ENCODE measurements at regions of chr3 and their contacts with region 1.

Region 1: DNA sequence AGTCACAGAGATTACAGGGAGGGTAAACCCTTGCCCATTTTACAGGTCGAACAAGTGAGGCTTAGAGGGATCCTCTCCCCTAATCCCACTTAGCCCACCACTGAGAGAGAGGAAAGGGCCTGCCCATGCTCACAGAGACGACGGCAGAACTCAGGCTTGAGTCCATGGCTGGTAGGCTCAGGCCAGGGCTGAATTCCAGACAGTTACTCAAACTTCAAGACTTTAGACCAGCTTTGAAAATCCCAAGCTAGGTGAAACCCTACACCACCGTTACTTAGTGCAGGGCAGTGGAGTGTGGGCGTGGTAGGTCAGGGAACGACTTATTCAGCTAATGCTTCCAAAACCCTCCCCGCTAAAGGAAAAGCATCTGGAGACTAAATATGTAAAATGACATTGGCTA is 16.4 kb downstream of the GRIP2 start:
- DNase-seq: no peak
- ATAC-seq: peak in 3 of 8 donors; percentile 0 to 1 (median 1)
- H3K4me3 ChIP-seq: no peak overlapping the region
- H3K27ac ChIP-seq: peak overlapping the region; percentile 56 to 96 (median 87)
- H3K4me1 ChIP-seq: peaks cover 21 to 80% (median 50%) of the 10 kb centered on the region in 9 donors
- H3K27me3 ChIP-seq: no peaks in the 10 kb centered on the region
- CTCF ChIP-seq: no peak

Region 2: DNA sequence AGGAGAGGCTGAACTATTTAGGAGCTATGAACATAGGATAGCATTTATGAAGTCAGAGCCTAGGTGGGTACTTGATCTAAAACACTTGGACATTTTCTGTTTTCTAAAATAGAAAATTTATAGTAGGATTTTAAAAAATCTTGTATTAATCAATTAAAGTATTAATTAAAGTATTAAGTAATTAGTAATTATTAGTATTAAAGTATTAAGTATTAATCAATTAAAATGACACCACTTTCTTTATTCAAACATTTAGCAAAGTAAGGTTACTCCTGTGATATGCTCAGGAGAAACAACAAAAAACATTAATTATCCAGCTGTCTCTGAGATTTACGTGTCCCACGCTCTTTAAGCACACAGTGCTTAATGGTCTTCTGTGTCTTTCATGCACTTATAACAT is 431.3 kb before region 1 on chr3:
- intact Hi-C with region 1: no loop called
- DNase-seq: no peak
- ATAC-seq: no peak
- H3K4me3 ChIP-seq: no peak overlapping the region
- H3K27ac ChIP-seq: no peak overlapping the region
- H3K4me1 ChIP-seq: no peaks in the 10 kb centered on the region
- H3K27me3 ChIP-seq: peaks cover 0 to 20% (median 4%) of the 10 kb centered on the region in 7 donors
- CTCF ChIP-seq: no peak

Region 3: GRCh38 chr3:14461748-14462324 is 62.0 kb before region 1 on chr3:
- intact Hi-C with region 1: no loop called
- DNase-seq: peak; percentile 51 to 59
- ATAC-seq: peak in 6 of 8 donors; percentile 35 to 74 (median 60)
- H3K4me3 ChIP-seq: no peak overlapping the region
- H3K27ac ChIP-seq: no peak overlapping the region
- H3K4me1 ChIP-seq: peaks cover 2 to 42% (median 25%) of the 10 kb centered on the region in 9 donors
- H3K27me3 ChIP-seq: peaks cover 0 to 37% (median 4%) of the 10 kb centered on the region in 7 donors
- CTCF ChIP-seq: peak in 8 of 9 donors; percentile 22 to 72 (median 55)

Region 4: GRCh38 chr3:14537590-14538447 is 14.0 kb after region 1 on chr3:
- intact Hi-C with region 1: loop called in 2 of 10 experiments (anchors 2 kb)
- DNase-seq: no peak
- ATAC-seq: peak in 6 of 8 donors; percentile 18 to 45 (median 36)
- H3K4me3 ChIP-seq: peak overlapping the region in 1 of 10 donors; percentile 60
- H3K27ac ChIP-seq: peak overlapping the region; percentile 10 to 96 (median 88)
- H3K4me1 ChIP-seq: peaks cover 24 to 79% (median 64%) of the 10 kb centered on the region in 9 donors
- H3K27me3 ChIP-seq: peaks cover 0 to 4% (median 0%) of the 10 kb centered on the region in 7 donors
- CTCF ChIP-seq: no peak